A549 (cell line): ENCODE measurements at regions of chr2 and their contacts with region 1.

Region 1: DNA sequence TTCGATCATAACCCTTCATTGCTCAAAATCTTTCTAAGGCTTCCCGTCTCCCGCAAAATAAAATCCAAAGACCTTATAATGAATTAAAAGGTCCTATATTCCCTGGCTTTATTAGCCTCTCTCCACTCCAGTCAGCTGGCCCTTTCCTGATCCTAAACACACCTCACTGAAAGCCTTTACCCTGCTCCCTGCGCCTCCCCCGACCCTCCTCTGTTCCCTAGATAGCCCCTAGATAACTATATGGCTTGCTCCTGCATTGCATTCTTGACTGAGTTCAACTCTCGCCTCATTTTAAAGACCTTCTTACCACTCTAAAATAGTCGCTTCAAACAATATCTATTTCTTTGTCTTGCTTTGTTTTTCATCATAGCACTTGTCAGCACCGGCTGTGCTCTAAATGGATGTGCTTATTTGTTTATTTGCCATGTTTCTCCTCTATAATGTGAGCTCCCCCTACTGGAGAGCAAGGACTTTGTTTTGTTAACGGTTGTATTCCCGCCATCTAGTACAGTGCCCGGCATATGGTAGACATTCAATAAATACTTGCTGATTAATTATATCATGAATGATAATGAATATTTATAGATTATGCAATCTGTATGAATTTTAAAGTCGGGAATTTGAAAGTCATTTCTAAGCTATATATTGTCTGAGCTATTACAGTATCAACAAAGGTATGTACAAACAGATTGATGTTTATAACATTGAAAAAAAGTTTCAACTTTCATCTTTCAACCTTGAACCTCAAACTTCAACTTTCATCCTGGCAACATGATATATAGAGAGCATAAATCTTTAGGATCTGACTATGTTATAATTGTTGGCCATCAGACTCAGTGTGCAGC is 32.4 kb upstream of the VIT start:
- DNase-seq: peak; percentile 55 to 85
- ATAC-seq: peak; percentile 96 to 97
- H3K4me3 ChIP-seq: no peak overlapping the region
- H3K27ac ChIP-seq: peak overlapping the region; percentile 35 to 68; a peak in 5 of 6 replicates
- H3K4me1 ChIP-seq: peaks cover 29% of the 10 kb centered on the region
- CTCF ChIP-seq: peak; percentile 98
- EP300 ChIP-seq: no peak
- POLR2A ChIP-seq: no peak
- RAD21 ChIP-seq: peak; percentile 98 to 99

Region 2: GRCh38 chr2:36355151-36355889 is 308.8 kb before region 1 on chr2 and contains the start of gene CRIM1:
- CTCF ChIA-PET with region 1: interaction called, 27 read pairs
- POLR2A ChIA-PET with region 1: no interaction called
- DNase-seq: peak; percentile 70 to 92
- ATAC-seq: peak; percentile 55 to 68
- H3K4me3 ChIP-seq: peak within 1 kb of the TSS; percentile 90
- H3K27ac ChIP-seq: peak within 1 kb of the TSS; percentile 93 to 97
- H3K4me1 ChIP-seq: peaks cover 45% of the 10 kb centered on the region
- CTCF ChIP-seq: no peak
- EP300 ChIP-seq: no peak
- POLR2A ChIP-seq: peak; percentile 95
- RAD21 ChIP-seq: peak in 1 of 2 experiments; percentile 35; a peak in 2 of 5 replicates
- polyA plus RNA-seq, gene CRIM1: 208 and 275 TPM in 2 replicates

Region 3: DNA sequence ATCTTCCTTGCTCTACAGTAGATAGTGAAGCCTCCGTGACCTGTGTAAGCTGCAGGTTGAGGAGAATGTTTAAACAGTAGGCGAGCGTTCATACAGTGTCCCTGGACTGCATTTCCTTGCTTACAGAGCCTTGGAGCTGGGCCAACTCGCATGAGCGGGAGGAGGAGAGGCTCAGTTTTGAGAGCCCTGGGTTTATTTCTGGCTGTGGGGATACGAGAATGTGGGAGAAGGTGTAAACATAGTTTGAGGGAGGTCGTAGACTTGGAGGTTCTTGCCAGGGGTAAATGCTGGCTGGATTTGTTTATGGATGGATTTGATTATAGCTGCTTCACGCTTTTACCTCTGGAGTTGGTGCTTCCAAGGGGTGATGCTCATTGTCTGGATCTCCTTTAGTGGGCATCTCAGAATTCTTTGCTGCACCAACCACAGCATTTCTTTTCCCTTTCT is 287.7 kb before region 1 on chr2:
- CTCF ChIA-PET with region 1: interaction called, 14 read pairs
- POLR2A ChIA-PET with region 1: no interaction called
- DNase-seq: peak in 1 of 2 experiments; percentile 77
- ATAC-seq: peak; percentile 16 to 25; a peak in 4 of 6 replicates
- H3K4me3 ChIP-seq: peak overlapping the region; percentile 17
- H3K27ac ChIP-seq: peak overlapping the region; percentile 75 to 84
- H3K4me1 ChIP-seq: peaks cover 100% of the 10 kb centered on the region
- CTCF ChIP-seq: no peak
- EP300 ChIP-seq: no peak
- POLR2A ChIP-seq: no peak
- RAD21 ChIP-seq: no peak

Region 4: GRCh38 chr2:36507408-36507812 is 156.7 kb before region 1 on chr2:
- CTCF ChIA-PET with region 1: interaction called, 10 read pairs
- POLR2A ChIA-PET with region 1: no interaction called
- DNase-seq: peak; percentile 60 to 72
- ATAC-seq: peak; percentile 92 to 94
- H3K4me3 ChIP-seq: no peak overlapping the region
- H3K27ac ChIP-seq: peak overlapping the region; percentile 25 to 31; a peak in 3 of 6 replicates
- H3K4me1 ChIP-seq: peaks cover 58% of the 10 kb centered on the region
- CTCF ChIP-seq: peak; percentile 87
- EP300 ChIP-seq: no peak
- POLR2A ChIP-seq: no peak
- RAD21 ChIP-seq: peak; percentile 92 to 97

Region 5: DNA sequence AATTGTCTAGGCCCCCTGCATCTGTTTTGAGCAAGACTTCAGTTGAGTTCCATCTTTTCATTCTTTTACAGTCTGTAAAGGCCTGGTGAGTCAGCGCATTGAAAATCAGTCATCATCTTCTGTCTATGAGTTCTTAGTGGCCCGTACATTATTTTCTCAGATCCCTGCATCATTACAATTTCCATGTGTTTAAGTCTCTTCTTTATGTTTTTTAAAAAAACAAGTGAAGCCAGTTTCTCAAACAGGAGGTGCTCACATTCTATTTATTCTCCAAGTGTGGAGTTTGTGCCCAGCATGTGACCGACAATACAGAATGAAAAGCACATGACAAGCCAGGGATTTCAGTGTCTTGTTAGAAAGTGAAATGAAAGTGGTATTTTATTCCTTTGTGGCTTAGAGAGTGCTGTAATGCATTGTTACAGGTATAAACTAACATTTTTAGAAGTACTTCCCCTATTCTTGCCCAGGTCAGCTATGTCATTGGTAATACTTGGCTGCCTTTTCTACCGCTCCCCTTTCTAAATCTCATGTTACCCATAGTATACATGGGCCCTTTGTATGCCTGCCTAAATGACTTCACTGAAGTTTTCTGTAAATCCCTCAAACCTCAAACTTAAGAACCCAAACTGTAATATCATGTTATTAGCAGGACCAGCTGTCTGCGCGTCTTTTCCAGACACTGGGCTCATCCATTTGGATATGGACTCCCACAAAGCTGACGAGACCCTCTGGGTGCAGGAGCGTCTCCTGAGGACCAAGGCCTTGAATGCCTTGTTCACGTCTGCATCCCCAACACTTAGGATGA is 133.7 kb before region 1 on chr2:
- CTCF ChIA-PET with region 1: interaction called, 13 read pairs
- POLR2A ChIA-PET with region 1: no interaction called
- DNase-seq: no peak
- ATAC-seq: no peak
- H3K4me3 ChIP-seq: no peak overlapping the region
- H3K27ac ChIP-seq: no peak overlapping the region
- H3K4me1 ChIP-seq: 0 out of 3 replicates have a peak, but pooled peaks cover 4% of the 10 kb centered on the region
- CTCF ChIP-seq: no peak
- EP300 ChIP-seq: no peak
- POLR2A ChIP-seq: no peak
- RAD21 ChIP-seq: no peak

Region 6: GRCh38 chr2:36549165-36549574 is 114.9 kb before region 1 on chr2:
- CTCF ChIA-PET with region 1: interaction called, 18 read pairs
- POLR2A ChIA-PET with region 1: no interaction called
- DNase-seq: no peak
- ATAC-seq: no peak
- H3K4me3 ChIP-seq: no peak overlapping the region
- H3K27ac ChIP-seq: 0 out of 6 replicates have a peak overlapping the region, but pooled peaks of 1 of the 2 experiments have one; percentile 1
- H3K4me1 ChIP-seq: peaks cover 16% of the 10 kb centered on the region
- CTCF ChIP-seq: no peak
- EP300 ChIP-seq: no peak
- POLR2A ChIP-seq: no peak
- RAD21 ChIP-seq: no peak

Region 7: GRCh38 chr2:36807223-36807900 is 143.3 kb after region 1 on chr2:
- CTCF ChIA-PET with region 1: no interaction called
- POLR2A ChIA-PET with region 1: no interaction called
- DNase-seq: no peak
- ATAC-seq: no peak
- H3K4me3 ChIP-seq: no peak overlapping the region
- H3K27ac ChIP-seq: no peak overlapping the region
- H3K4me1 ChIP-seq: no peaks in the 10 kb centered on the region
- CTCF ChIP-seq: no peak
- EP300 ChIP-seq: no peak
- POLR2A ChIP-seq: no peak
- RAD21 ChIP-seq: no peak